Caco-2 (cell line): ENCODE measurements at regions of chrX and their contacts with region 1.

Region 1: GRCh38 chrX:96182366-96182765 is 502.3 kb upstream of the DIAPH2 start:
- DNase-seq: peak; percentile 36 to 55
- H3K4me3 ChIP-seq: no peak overlapping the region
- H3K4me3 Mint-ChIP-seq: no peak overlapping the region
- H3K27ac Mint-ChIP-seq: no peak overlapping the region
- H3K4me1 ChIP-seq: no peaks in the 10 kb centered on the region
- H3K4me1 Mint-ChIP-seq: no peaks in the 10 kb centered on the region
- H3K27me3 ChIP-seq: no peaks in the 10 kb centered on the region
- H3K27me3 Mint-ChIP-seq: no peaks in the 10 kb centered on the region
- CTCF ChIP-seq: peak; percentile 27 to 58

Region 2: GRCh38 chrX:95346856-95347255 is 835.5 kb before region 1 on chrX:
- CTCF ChIA-PET with region 1: no interaction called
- POLR2A ChIA-PET with region 1: no interaction called
- intact Hi-C with region 1: loop called (anchors 5 kb)
- DNase-seq: no peak
- H3K4me3 ChIP-seq: no peak overlapping the region
- H3K4me3 Mint-ChIP-seq: no peak overlapping the region
- H3K27ac Mint-ChIP-seq: no peak overlapping the region
- H3K4me1 ChIP-seq: no peaks in the 10 kb centered on the region
- H3K4me1 Mint-ChIP-seq: no peaks in the 10 kb centered on the region
- H3K27me3 ChIP-seq: no peaks in the 10 kb centered on the region
- H3K27me3 Mint-ChIP-seq: peaks cover 2% of the 10 kb centered on the region
- CTCF ChIP-seq: peak in 1 of 2 experiments; percentile 13

Region 3: DNA sequence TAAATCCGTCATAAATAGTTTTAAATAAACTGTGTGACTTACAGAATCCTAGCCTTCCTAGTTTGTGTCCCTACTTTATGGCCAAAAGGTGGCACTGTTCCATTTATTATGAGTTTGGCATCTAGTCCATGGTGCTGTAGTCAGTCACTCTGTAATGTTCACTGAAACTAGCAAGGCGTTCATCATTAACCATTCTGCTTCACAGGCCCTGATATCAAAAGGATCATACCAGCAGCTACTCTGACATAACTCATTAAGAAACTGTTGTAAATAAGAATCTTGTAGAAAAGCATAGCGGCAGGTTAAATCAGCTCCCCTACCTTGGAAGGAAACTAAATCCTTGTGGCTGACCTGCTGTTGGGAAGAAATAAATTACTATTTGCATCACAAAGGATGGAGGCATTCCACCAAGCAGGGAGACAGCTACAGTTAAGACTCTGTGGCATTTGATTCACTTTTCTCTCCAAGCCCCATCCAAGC is 417.4 kb before region 1 on chrX:
- CTCF ChIA-PET with region 1: no interaction called
- POLR2A ChIA-PET with region 1: no interaction called
- intact Hi-C with region 1: loop called (anchors 1 kb)
- DNase-seq: peak in 1 of 2 experiments; percentile 7
- H3K4me3 ChIP-seq: no peak overlapping the region
- H3K4me3 Mint-ChIP-seq: no peak overlapping the region
- H3K27ac Mint-ChIP-seq: no peak overlapping the region
- H3K4me1 ChIP-seq: no peaks in the 10 kb centered on the region
- H3K4me1 Mint-ChIP-seq: no peaks in the 10 kb centered on the region
- H3K27me3 ChIP-seq: no peaks in the 10 kb centered on the region
- H3K27me3 Mint-ChIP-seq: no peaks in the 10 kb centered on the region
- CTCF ChIP-seq: peak; percentile 42 to 43

Region 4: GRCh38 chrX:96112689-96113088 is 69.7 kb before region 1 on chrX:
- CTCF ChIA-PET with region 1: no interaction called
- POLR2A ChIA-PET with region 1: no interaction called
- intact Hi-C with region 1: no loop called
- DNase-seq: no peak
- H3K4me3 ChIP-seq: no peak overlapping the region
- H3K4me3 Mint-ChIP-seq: no peak overlapping the region
- H3K27ac Mint-ChIP-seq: no peak overlapping the region
- H3K4me1 ChIP-seq: no peaks in the 10 kb centered on the region
- H3K4me1 Mint-ChIP-seq: no peaks in the 10 kb centered on the region
- H3K27me3 ChIP-seq: no peaks in the 10 kb centered on the region
- H3K27me3 Mint-ChIP-seq: no peaks in the 10 kb centered on the region
- CTCF ChIP-seq: no peak